ENCODE measurements at regions of chr11 and their contacts with region 1.

Region 1: GRCh38 chr11:26297189-26297975 is 34.5 kb upstream of the ANO3 start:
- DNase-seq: no peak

Region 2: GRCh38 chr11:26162291-26162690 is 135.1 kb before region 1 on chr11:
- intact Hi-C with region 1: no loop called
- DNase-seq: no peak

Region 3: GRCh38 chr11:26254378-26254777 is 43.0 kb before region 1 on chr11:
- intact Hi-C with region 1: no loop called
- DNase-seq: no peak

Region 4: GRCh38 chr11:26649884-26650283 is 352.5 kb after region 1 on chr11:
- intact Hi-C with region 1: loop called (anchors 5 kb)
- DNase-seq: no peak

Region 5: GRCh38 chr11:27158722-27159679 is 861.6 kb after region 1 on chr11:
- intact Hi-C with region 1: loop called (anchors 5 kb)
- DNase-seq: no peak